ENCODE measurements at regions of chr20 and their contacts with region 1.

Region 1: DNA sequence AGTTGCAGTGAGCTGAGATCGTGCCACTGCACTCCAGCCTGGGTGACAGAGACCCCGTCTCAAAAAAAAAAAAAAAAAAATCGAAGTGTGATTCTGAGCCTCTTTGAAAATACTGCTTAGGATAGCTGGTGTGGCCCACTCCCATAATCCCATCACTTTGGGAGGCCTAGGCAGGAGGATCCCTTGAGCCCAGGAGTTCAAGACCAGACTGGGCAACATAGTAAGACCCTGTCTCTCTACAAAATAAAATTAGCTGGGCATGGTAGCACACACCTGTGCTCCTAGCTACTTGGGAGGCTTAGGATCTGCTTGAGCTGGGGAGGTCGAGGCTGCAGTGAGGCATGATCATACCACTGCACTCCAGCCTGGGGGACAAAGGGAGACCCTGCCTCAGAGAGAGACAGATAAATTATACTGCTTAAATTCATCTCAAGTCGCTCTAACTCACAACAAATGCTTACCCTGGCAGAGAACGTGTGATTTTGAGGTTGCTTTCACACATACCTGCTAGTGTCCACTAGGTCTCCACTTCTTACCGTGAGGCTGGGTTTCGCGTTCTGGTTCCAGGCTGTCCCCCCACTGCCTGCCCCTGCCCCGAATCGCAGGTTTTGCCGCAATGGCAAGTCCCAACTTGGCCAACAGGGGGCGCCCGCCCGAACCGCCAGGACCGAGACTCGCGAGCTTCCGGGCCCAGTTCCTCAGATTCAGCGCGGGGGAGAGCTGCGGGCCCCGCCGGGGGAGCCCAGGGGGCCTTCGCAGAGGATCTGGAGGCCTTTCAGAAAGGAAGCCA is 12.3 kb upstream of the TMC2 start:
- DNase-seq: peak; percentile 85 to 94 (median 88)
- ATAC-seq: peak; percentile 66 to 84 (median 78)
- H3K4me3 ChIP-seq: peak overlapping the region; percentile 62 to 96 (median 80)
- H3K27ac ChIP-seq: peak overlapping the region; percentile 58 to 97 (median 89)
- H3K4me1 ChIP-seq: peaks cover 0 to 40% (median 4%) of the 10 kb centered on the region in 12 donors
- H3K27me3 ChIP-seq: no peaks in the 10 kb centered on the region
- CTCF ChIP-seq: peak; percentile 93 to 99 (median 96)
- POLR2A ChIP-seq: peak in 1 of 2 donors; percentile 62

Region 2: GRCh38 chr20:2508631-2509467 is 15.3 kb before region 1 on chr20 and contains the start of gene ZNF343:
- intact Hi-C with region 1: loop called in 1 of 10 experiments (anchors 2 kb)
- DNase-seq: peak; percentile 83 to 85 (median 83)
- ATAC-seq: peak; percentile 94 to 98 (median 96)
- H3K4me3 ChIP-seq: peak within 1 kb of the TSS; percentile 55 to 89 (median 76)
- H3K27ac ChIP-seq: peak within 1 kb of the TSS; percentile 85 to 95 (median 89)
- H3K4me1 ChIP-seq: peaks cover 0 to 18% (median 15%) of the 10 kb centered on the region in 12 donors
- H3K27me3 ChIP-seq: no peaks in the 10 kb centered on the region
- CTCF ChIP-seq: no peak
- POLR2A ChIP-seq: peak in 1 of 2 donors; percentile 57
- total RNA-seq, gene ZNF343: 4.2 to 8.6 (median 5.4) TPM

Region 3: DNA sequence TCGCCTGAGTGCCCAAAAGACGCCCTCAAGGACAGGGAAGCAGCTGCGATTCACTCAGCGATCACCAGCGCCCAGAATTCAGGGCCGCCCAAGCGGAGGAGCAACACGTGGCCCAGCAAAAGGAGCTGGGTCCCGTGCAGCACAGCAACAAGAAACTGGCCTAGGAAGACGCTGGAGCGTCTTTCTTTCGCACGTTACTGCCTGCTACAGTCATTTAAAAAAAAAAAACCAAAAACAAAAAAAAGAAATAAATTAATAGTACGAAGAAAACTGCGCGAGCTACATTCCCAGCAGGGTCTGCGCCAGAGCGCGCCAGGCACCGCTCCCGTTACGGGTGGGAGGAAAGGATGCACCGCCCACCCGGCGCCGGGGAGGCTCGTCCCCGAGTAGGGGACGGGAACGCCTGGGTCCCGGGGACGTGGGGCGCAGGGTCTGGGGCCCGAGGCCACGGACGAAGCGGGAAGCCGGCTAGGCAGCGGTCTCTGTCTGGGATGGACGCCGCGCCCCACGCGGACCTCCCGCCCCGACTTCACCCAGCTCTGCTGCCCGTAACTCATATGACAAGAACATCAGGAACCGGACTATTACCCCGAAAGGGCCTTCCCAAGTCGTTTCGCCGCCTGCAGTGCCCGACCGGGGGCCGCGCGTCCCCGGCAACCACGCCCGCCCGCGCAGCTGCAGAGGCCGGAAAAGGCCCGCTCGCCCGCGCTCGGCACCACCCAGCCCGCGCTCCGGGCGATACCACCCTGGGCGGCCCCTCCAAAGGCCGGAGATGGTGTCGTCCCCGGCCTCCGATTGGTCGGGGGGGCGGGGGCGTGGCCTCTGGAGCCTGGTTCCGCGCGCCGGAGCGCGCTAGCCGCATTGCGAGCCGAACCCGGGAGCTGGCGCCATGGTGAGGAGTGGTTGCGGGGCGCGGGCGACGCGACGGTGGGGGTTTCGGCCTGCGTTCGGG is 127.9 kb after region 1 on chr20 and contains the start of gene NOP56:
- intact Hi-C with region 1: loop called in 8 of 10 experiments (anchors 5 to 10 kb)
- DNase-seq: peak; percentile 92 to 97 (median 94)
- ATAC-seq: peak; percentile 96 to 98 (median 98)
- H3K4me3 ChIP-seq: peak within 1 kb of the TSS; percentile 71 to 99 (median 90)
- H3K27ac ChIP-seq: peak within 1 kb of the TSS; percentile 85 to 98 (median 94)
- H3K4me1 ChIP-seq: peaks cover 4 to 28% (median 20%) of the 10 kb centered on the region in 12 donors
- H3K27me3 ChIP-seq: no peaks in the 10 kb centered on the region
- CTCF ChIP-seq: no peak
- POLR2A ChIP-seq: peak; percentile 18 to 94
- total RNA-seq, gene NOP56: 24.6 to 78.8 (median 51.0) TPM

Region 4: GRCh38 chr20:2991532-2991931 is 467.4 kb after region 1 on chr20:
- intact Hi-C with region 1: loop called in 1 of 10 experiments (anchors 5 kb)
- DNase-seq: no peak
- ATAC-seq: no peak
- H3K4me3 ChIP-seq: no peak overlapping the region
- H3K27ac ChIP-seq: no peak overlapping the region
- H3K4me1 ChIP-seq: peaks cover 0 to 17% (median 0%) of the 10 kb centered on the region in 12 donors
- H3K27me3 ChIP-seq: no peaks in the 10 kb centered on the region
- CTCF ChIP-seq: no peak
- POLR2A ChIP-seq: no peak

Measured in heart left ventricle (tissue), 16 donors.